ENCODE measurements at regions of chr6 and their contacts with region 1.

Region 1: GRCh38 chr6:94245395-94245794 is 826.0 kb upstream of the EPHA7 start:
- DNase-seq: no peak

Region 2: DNA sequence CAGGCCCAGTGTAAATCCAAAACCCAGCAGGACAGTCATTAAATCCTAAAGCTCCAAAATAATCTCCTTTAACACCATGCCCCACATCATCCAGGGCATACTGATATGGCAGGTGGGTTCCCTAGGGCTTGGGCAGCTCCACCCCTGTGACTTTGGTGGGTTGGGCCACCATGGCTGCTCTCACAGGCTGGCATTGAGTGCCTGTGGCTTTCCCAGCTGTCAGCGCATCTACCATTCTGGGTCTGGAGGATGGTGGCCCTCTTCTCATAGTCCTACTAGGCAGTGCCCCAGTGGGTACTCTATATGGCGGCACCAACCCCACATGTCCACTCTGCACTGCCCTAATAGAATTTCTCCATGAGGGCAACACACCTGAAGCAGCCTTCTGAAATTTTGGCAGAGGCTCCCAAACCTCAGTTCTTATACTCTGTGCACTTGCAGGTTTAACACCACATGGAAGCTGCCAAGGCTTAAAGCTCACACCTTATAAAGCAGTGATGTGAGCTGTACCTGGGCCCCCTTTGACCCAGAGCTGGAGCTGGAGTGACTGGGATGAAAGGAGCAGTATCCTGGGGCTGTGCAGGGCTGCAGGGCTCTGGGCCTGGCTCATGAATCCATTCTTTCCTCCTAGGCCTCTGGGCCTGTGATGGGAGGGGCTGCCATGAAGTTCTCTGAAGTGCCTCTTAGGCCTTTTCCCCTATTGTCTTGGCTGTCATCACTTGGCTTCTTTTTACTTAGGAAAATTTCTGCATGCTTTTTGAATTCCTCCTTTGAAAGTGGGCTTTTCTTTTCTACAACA is 60.5 kb before region 1 on chr6:
- intact Hi-C with region 1: no loop called
- DNase-seq: no peak

Region 3: GRCh38 chr6:94270091-94270948 is 24.9 kb after region 1 on chr6:
- intact Hi-C with region 1: loop called (anchors 2 kb)
- DNase-seq: no peak

Region 4: GRCh38 chr6:94600636-94601035 is 355.2 kb after region 1 on chr6:
- intact Hi-C with region 1: no loop called
- DNase-seq: no peak

Measured in cardiac septum (tissue), 1 donor.